ENCODE measurements at regions of chr4 and their contacts with region 1.

Region 1: DNA sequence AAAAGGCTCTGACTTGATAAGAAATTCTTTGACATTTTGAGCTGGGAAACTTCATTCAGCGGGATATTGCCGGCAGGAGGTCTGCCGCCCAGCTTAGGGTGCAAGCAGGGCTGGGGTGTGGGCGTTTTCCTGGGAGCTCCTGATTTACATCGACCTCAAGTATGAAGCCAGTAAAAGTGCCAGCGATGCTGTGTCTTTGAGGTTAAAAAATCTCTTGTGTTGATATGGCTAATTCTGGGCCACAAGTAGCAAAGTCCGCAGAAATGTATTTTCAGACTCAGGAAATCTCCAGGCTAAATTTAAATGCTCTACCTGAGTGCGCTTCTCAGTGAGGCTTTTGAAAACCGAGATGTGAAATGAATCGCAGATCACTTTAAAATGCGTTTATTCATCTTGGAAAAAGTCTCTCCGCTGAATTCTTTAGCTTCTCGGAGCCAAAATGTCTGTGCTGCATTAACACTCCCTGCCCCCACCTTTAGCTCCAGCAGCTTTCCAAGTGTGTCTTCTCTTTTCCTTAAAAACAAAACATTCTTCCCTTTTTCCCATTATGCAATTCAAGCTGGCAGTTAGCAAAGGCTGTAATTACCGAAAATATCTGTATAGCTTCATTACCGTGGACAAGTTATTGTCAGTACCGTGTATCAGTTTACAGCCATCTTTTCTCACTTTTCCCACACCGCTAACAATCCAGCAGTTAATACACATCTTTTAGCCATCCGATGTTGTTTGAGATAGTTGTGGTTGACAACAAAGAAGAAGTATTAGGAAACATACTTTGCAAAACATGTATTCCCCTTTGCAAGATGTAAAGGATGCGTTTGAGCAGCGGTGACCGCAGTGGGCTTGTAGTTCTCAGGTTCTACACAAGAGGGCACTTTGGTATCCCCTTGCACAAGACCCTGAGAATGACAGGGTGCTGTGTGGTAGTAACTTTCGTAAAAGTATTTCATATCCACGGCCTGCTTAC is 136.0 kb upstream of the STX18 start:
- DNase-seq: peak; percentile 61
- ATAC-seq: peak; percentile 86
- H3K4me3 Mint-ChIP-seq: peak overlapping the region; percentile 49
- H3K27ac Mint-ChIP-seq: no peak overlapping the region; the same call in 1 of the 2 replicates
- H3K4me1 Mint-ChIP-seq: peaks cover 25% of the 10 kb centered on the region
- H3K27me3 Mint-ChIP-seq: no peaks in the 10 kb centered on the region; the same call in 1 of the 2 replicates
- CTCF ChIP-seq: peak; percentile 75

Region 2: GRCh38 chr4:4694296-4694772 is 16.5 kb after region 1 on chr4:
- CTCF ChIA-PET with region 1: interaction called, 11 read pairs
- POLR2A ChIA-PET with region 1: no interaction called
- DNase-seq: peak; percentile 49
- ATAC-seq: peak; percentile 96
- H3K4me3 Mint-ChIP-seq: no peak overlapping the region
- H3K27ac Mint-ChIP-seq: no peak overlapping the region
- H3K4me1 Mint-ChIP-seq: peaks cover 18% of the 10 kb centered on the region
- H3K27me3 Mint-ChIP-seq: peaks cover 3% of the 10 kb centered on the region; the same call in 1 of the 2 replicates
- CTCF ChIP-seq: no peak

Region 3: DNA sequence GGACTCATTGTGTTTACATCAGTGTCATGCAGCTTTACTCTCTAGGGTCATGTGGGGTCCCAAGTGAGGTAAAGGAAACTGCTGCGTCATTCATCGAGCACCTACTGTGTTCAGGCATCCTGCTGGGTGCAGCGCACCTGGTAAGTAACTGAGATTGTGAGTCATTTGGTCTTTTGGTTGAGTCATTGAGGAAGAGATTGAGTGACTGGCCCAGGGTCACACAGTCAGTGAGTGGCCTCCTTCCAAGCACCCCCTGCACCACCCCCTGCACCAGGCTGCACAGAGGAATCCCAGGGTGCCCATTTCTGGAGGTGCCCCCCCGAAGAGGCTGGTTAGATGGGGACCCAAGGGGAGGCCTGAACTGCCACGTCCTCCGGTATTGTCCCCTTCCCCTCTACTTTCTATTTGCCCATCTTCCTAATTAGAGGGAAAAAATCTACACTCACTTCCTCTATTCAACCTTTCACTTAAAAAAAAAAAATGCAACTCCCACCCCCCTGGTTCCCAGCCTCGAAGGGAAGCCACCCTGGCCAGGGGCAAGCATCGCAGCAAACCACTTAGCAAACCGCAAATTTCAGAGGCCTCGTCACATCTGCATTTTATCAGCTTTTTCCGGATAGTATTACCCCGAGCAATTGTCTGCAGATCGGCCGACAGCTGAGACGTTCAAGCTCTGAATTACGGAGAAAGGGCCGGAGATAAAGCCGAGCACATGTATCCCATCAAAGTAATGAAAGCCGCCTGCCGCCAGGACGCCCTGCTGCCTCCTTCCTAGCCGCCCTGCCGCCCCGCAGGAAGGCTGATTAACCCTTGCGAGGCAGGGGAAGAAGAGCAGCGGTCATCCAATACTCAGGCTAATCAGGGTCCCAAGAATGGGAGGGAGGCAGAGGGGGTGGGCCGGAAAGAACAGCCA is 85.3 kb after region 1 on chr4:
- CTCF ChIA-PET with region 1: interaction called, 19 read pairs
- POLR2A ChIA-PET with region 1: no interaction called
- DNase-seq: peak; percentile 38
- ATAC-seq: peak; percentile 37
- H3K4me3 Mint-ChIP-seq: peak overlapping the region; percentile 50
- H3K27ac Mint-ChIP-seq: 0 out of 2 replicates have a peak overlapping the region, but pooled peaks have one; percentile 40
- H3K4me1 Mint-ChIP-seq: peaks cover 61% of the 10 kb centered on the region
- H3K27me3 Mint-ChIP-seq: peaks cover 23% of the 10 kb centered on the region
- CTCF ChIP-seq: no peak

Region 4: GRCh38 chr4:4852591-4853375 is 174.9 kb after region 1 on chr4:
- CTCF ChIA-PET with region 1: interaction called, 19 read pairs
- POLR2A ChIA-PET with region 1: no interaction called
- DNase-seq: peak; percentile 69
- ATAC-seq: peak; percentile 75
- H3K4me3 Mint-ChIP-seq: peak overlapping the region; percentile 65
- H3K27ac Mint-ChIP-seq: no peak overlapping the region
- H3K4me1 Mint-ChIP-seq: peaks cover 37% of the 10 kb centered on the region
- H3K27me3 Mint-ChIP-seq: peaks cover 99% of the 10 kb centered on the region
- CTCF ChIP-seq: no peak

Region 5: GRCh38 chr4:4914059-4914820 is 236.4 kb after region 1 on chr4:
- CTCF ChIA-PET with region 1: no interaction called
- POLR2A ChIA-PET with region 1: no interaction called
- DNase-seq: no peak
- ATAC-seq: no peak
- H3K4me3 Mint-ChIP-seq: no peak overlapping the region
- H3K27ac Mint-ChIP-seq: no peak overlapping the region
- H3K4me1 Mint-ChIP-seq: no peaks in the 10 kb centered on the region
- H3K27me3 Mint-ChIP-seq: peaks cover 72% of the 10 kb centered on the region
- CTCF ChIP-seq: no peak

Measured in WTC11 (cell line).